Activated naive CD4-positive, alpha-beta T cell treated with anti-CD3 and anti-CD28 coated beads for 36 hours (primary cell): ENCODE measurements at regions of chr2 and their contacts with region 1.

Region 1: DNA sequence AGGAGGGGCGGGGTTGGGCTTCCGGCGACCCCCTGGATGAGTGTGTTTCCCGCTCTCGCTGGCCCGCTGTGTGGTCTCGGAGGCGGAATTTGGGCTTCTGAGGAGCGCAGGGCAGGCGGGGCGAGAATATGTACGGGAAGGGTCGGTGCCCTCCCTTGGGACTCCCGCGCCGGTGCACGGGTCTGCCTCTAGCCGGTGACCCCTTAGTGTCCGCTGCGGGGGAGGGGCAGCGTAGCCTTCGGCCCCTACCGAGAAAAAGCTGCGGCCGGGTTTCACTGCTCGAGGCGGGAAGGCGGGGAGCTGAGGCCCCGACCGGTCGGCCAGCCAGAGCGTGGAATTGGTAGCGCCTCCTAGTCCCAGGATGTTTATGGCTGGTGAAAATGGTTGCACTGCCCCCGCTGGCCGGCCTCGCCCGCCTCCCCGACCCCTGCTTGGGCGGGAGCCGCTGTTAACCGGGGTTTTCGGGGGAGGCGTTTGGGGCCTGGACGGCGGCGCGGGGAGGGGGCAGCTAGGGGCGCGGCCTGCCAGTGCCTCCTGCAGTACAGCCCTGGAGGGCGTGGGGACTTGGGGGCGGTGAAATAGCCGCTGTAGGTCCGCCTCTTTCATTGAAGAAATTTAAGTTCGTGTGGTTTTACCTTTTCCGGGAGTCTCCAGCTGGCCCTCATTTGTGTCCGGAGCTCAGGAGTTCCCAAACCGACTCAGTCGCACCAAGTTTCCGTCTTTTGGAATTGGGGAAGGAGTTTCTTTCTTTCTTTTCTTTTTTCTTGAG is at the start of gene UGP2:
- DNase-seq: peak; percentile 88
- H3K4me3 Mint-ChIP-seq: peak within 1 kb of the TSS; percentile 99
- H3K27ac Mint-ChIP-seq: peak within 1 kb of the TSS; percentile 99
- H3K4me1 Mint-ChIP-seq: peaks cover 37% of the 10 kb centered on the region
- H3K27me3 Mint-ChIP-seq: no peaks in the 10 kb centered on the region
- total RNA-seq, gene UGP2: 82.2 to 93.1 TPM

Region 2: DNA sequence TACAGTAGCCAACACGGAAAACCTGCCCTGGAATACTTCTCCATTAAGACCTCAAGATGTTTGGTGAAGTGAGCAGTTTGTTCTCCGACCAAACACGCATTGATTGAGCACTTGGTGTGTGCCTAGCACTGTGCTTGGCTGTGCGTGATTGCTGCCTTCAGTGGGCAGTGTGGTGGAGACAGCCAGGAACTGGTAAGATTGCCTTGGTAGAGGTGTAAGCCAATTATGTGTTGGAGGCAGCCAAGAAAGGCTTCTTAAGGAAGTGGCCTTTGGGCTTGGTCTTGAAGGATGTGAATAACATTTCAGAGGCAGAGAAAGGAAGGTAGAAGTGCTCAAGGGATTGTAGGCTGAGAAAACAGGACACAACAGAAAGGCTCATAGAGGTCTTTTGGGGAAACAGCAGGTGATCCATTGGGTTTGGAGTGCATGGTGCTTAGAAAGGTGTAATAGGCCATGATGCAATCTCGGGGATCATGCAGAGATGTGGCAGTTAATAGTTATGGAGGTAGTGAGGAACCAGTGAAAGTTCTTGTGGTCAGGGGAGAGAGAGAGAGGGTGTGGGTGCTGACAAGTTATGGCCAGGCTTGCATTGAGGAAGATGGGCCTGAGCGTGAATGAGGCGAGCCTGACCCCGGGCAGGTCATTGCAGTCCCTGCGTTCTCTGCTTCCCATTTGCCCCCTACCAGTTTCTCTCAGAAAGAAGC is 1639.3 kb before region 1 on chr2:
- CTCF ChIA-PET with region 1: no interaction called
- intact Hi-C with region 1: loop called (anchors 2 kb)
- DNase-seq: peak; percentile 35
- H3K4me3 Mint-ChIP-seq: peak overlapping the region; percentile 17
- H3K27ac Mint-ChIP-seq: peak overlapping the region; percentile 97
- H3K4me1 Mint-ChIP-seq: peaks cover 79% of the 10 kb centered on the region
- H3K27me3 Mint-ChIP-seq: no peaks in the 10 kb centered on the region

Region 3: DNA sequence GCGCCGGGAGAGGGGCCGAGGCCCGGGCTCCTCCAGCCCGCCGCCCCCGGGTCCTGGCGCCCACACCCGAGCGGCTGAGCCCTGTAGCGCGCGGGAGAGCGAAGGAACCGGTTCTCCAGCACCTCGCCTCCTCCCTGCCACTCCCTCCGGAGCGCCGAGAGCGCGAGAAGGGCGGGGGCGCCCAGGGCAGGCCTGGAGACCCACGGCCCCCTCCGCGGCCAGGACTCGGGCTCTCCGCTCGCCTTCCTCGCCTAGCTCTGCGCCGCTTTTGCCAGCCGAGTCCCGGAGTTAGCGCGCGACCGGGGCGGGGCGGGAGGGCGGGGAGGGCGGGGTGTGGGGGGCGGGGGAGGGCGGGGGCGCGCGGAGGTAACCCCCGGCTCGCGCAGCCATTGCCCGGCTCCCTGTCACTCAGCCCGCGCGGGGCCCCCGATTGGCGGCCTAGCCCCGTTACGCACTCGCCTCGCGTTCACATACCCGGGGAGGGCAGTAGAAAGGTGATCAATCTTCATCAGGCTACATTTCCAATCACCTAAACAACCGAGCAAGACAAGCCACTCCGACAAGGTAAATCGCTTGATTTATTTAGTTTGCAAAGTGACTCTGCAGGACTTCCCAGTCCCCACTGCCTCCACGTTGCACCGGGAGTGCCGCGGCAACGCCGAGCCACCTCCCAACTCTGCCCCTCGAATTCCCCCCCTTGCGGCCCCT is 791.0 kb before region 1 on chr2 and contains the start of gene OTX1:
- CTCF ChIA-PET with region 1: no interaction called
- intact Hi-C with region 1: loop called (anchors 5 kb)
- DNase-seq: peak; percentile 55
- H3K4me3 Mint-ChIP-seq: peak within 1 kb of the TSS; percentile 80
- H3K27ac Mint-ChIP-seq: no peak within 1 kb of the TSS
- H3K4me1 Mint-ChIP-seq: peaks cover 61% of the 10 kb centered on the region
- H3K27me3 Mint-ChIP-seq: peaks cover 79% of the 10 kb centered on the region
- total RNA-seq, gene OTX1: not detected

Region 4: DNA sequence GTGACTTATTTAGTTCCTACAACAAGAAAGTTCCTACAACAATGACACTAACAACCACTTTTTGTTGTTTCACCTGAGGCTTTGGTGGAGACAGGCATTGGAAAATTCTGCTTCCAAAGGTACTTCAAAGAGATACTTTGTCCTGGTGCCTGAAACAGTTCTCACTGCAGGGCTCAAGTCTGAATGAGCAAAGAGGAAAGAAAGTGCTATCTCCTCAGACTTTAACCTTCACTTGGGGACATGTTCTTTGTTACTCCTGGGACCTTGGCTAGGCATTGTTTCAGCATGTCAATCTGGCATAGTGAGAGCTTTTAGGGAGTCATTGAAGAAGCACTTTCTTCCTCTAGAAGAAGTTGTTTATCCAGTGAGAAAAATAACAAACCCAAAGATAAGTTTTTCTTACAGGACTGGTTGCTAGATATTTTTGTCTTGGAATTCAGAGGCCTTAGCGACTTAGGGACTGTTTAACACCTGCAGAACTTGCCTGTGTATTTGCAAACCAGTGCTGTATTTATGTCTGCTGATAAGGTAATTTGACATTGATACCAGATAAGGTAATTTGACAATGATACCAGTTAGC is 240.5 kb before region 1 on chr2:
- CTCF ChIA-PET with region 1: no interaction called
- intact Hi-C with region 1: no loop called
- DNase-seq: no peak
- H3K4me3 Mint-ChIP-seq: no peak overlapping the region
- H3K27ac Mint-ChIP-seq: peak overlapping the region; percentile 13
- H3K4me1 Mint-ChIP-seq: peaks cover 3% of the 10 kb centered on the region
- H3K27me3 Mint-ChIP-seq: no peaks in the 10 kb centered on the region

Region 5: DNA sequence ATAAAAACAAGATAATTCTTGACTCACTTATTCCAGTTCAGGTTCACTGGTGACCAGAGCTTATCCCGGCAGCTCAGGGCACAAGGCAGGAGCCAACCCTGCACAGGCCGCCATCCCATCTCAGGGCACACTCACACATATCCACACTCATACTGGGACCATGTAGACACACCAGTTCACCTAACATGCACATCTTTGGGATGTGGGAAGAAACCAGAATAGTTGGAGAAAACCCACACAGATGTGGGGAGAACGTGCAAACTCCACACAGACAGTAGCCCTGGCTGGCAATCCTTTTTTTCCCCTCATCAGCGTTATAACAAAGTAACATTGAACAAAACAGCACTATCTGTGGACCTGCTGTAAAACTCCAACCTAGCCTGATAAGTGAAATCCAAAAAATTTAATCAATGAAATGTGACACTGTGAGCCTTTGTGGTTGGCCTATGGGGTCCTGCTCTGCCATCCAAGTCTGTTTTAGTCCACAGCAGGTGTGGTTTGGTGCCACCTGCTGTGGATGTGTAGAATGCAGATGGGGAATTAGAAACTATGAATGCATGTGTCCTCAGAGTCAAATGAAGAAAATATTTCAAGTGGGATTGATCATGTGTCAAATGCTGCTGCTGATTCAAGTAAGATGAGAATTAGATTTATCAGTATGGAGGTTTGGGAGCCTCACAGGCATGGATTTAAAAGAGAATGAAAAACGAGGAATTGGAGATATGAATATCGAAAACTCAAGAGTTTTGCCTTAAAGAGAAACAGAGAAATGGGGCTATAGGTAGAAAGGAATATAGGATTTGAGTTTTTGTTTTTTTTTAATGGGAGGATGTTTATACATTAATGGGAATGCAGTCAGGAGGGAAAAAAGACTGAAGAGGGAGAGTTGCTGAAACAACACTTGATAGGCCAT is 47.3 kb after region 1 on chr2:
- CTCF ChIA-PET with region 1: interaction called, 3 read pairs
- intact Hi-C with region 1: loop called (anchors 1 kb)
- DNase-seq: peak; percentile 74
- H3K4me3 Mint-ChIP-seq: no peak overlapping the region
- H3K27ac Mint-ChIP-seq: peak overlapping the region; percentile 53
- H3K4me1 Mint-ChIP-seq: peaks cover 11% of the 10 kb centered on the region
- H3K27me3 Mint-ChIP-seq: no peaks in the 10 kb centered on the region

Region 6: GRCh38 chr2:64062829-64063228 is 221.4 kb after region 1 on chr2:
- CTCF ChIA-PET with region 1: no interaction called
- intact Hi-C with region 1: loop called (anchors 1 kb)
- DNase-seq: peak; percentile 36
- H3K4me3 Mint-ChIP-seq: no peak overlapping the region
- H3K27ac Mint-ChIP-seq: peak overlapping the region; percentile 23
- H3K4me1 Mint-ChIP-seq: peaks cover 36% of the 10 kb centered on the region
- H3K27me3 Mint-ChIP-seq: no peaks in the 10 kb centered on the region

Region 7: DNA sequence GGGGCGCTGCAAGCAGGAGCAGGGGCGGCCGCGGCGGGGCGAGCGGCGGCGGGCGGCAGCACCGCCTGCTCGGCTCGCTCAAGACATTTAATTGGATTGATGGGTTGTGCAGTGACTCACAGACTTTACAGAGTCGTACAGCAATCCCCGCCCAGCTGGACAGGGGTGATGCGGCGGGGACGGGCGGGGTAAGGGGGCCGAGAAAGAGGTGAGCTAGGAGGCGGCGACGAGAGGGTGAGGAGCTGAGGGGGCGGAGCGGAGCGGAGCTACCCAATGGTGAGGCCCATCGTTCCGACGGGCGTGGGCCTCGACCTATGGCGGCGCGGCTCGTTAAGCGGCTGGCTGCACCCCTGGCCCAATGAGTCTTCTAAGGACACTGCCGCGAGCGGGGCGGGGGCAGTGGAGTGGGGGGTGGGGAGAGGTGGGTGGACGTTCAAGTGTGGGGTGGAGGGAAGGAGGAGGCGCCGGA is 909.4 kb after region 1 on chr2:
- CTCF ChIA-PET with region 1: no interaction called
- intact Hi-C with region 1: loop called (anchors 5 kb)
- DNase-seq: peak; percentile 99
- H3K4me3 Mint-ChIP-seq: peak overlapping the region; percentile 99
- H3K27ac Mint-ChIP-seq: peak overlapping the region; percentile 89
- H3K4me1 Mint-ChIP-seq: peaks cover 30% of the 10 kb centered on the region
- H3K27me3 Mint-ChIP-seq: no peaks in the 10 kb centered on the region

Region 8: GRCh38 chr2:65432227-65433190 is 1591.1 kb after region 1 on chr2 and contains the start of gene SPRED2:
- CTCF ChIA-PET with region 1: no interaction called
- intact Hi-C with region 1: loop called (anchors 10 kb)
- DNase-seq: peak; percentile 89
- H3K4me3 Mint-ChIP-seq: peak within 1 kb of the TSS; percentile 91
- H3K27ac Mint-ChIP-seq: peak within 1 kb of the TSS; percentile 75
- H3K4me1 Mint-ChIP-seq: peaks cover 11% of the 10 kb centered on the region
- H3K27me3 Mint-ChIP-seq: peaks cover 26% of the 10 kb centered on the region
- total RNA-seq, gene SPRED2: 8.0 to 11.4 TPM